ENCODE measurements at regions of chr19 and their contacts with region 1.

Region 1: DNA sequence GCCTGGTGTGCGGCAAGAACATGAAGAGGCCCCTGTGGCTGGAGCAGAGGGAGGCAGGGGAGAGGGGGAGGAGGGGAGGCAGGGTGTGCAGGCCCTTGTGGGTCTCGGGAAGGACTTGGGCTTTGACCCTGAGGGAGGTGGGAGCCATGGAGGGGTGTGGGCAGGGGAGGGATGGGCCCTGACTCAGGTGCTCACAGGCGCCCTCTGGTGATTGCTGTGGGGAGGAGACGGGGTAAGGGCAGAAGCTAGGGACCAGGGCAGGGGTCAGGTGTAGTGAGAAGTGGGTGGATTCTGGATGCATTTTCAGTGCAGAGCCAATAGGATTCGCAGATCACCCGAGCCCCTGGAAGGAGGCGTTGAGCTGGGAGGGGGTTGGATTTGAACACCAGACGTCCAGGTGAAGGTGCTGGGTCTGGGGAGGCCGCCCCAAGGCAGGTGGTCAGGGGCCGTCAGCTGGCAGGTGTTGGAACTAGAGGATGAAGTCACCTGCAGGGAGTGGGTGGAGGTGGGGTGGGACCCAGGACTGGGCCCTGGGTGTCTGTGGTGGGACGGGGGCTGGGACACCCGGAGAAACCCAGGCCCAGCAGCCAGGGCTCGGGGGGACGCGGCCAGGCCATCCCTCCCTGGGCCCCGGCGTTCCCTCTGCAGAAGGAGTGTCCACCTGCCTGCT is 185.4 kb downstream of the KDM4B start:
- DNase-seq: peak in 1 of 2 donors; percentile 34
- ATAC-seq: peak in 6 of 8 donors; percentile 17 to 61 (median 34)
- H3K4me3 ChIP-seq: no peak overlapping the region
- H3K27ac ChIP-seq: no peak overlapping the region
- H3K4me1 ChIP-seq: peaks cover 0 to 10% (median 0%) of the 10 kb centered on the region in 9 donors
- H3K27me3 ChIP-seq: no peaks in the 10 kb centered on the region
- CTCF ChIP-seq: peak in 7 of 9 donors; percentile 36 to 55 (median 44)

Region 2: DNA sequence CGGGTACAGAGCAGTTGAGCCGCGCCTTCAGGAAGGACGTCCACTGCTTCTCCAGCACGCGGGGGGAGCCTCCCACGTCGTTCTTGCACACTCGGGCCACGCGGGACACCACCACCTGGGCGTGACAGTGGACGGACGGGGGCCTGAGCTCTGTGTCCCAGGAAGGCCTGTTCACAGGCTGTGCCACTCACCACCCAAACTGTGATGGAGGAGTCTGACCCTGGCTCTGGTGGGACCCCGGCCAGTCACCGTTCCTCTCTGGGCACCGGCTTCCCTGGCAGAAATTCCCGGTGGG is 601.8 kb before region 1 on chr19:
- intact Hi-C with region 1: loop called in 1 of 10 experiments (anchors 5 kb)
- DNase-seq: no peak
- ATAC-seq: no peak
- H3K4me3 ChIP-seq: no peak overlapping the region
- H3K27ac ChIP-seq: no peak overlapping the region
- H3K4me1 ChIP-seq: peaks cover 0 to 9% (median 0%) of the 10 kb centered on the region in 9 donors
- H3K27me3 ChIP-seq: no peaks in the 10 kb centered on the region
- CTCF ChIP-seq: no peak